Panc1 (cell line): ENCODE measurements at regions of chr5 and their contacts with region 1.

Region 1: GRCh38 chr5:55691265-55692105 is 20.6 kb downstream of the SLC38A9 start:
- DNase-seq: peak; percentile 60
- ATAC-seq: peak; percentile 84
- H3K4me3 ChIP-seq: no peak overlapping the region
- H3K27ac ChIP-seq: no peak overlapping the region
- H3K4me1 ChIP-seq: no peaks in the 10 kb centered on the region
- H3K27me3 ChIP-seq: no peaks in the 10 kb centered on the region
- CTCF ChIP-seq: peak; percentile 66; the same call in 1 of the 2 replicates

Region 2: GRCh38 chr5:55344392-55344992 is 347.0 kb before region 1 on chr5:
- CTCF ChIA-PET with region 1: no interaction called
- POLR2A ChIA-PET with region 1: no interaction called
- in situ Hi-C with region 1: no loop called
- intact Hi-C with region 1: loop called (anchors 10 kb)
- DNase-seq: peak; percentile 54
- ATAC-seq: no peak
- H3K4me3 ChIP-seq: no peak overlapping the region
- H3K27ac ChIP-seq: no peak overlapping the region
- H3K4me1 ChIP-seq: no peaks in the 10 kb centered on the region
- H3K27me3 ChIP-seq: no peaks in the 10 kb centered on the region
- CTCF ChIP-seq: peak; percentile 82; the same call in 1 of the 2 replicates

Region 3: GRCh38 chr5:55407059-55407684 is 284.3 kb before region 1 on chr5:
- CTCF ChIA-PET with region 1: interaction called, 5 read pairs
- POLR2A ChIA-PET with region 1: no interaction called
- in situ Hi-C with region 1: no loop called
- intact Hi-C with region 1: loop called (anchors 2 kb)
- DNase-seq: peak; percentile 15
- ATAC-seq: peak; percentile 82
- H3K4me3 ChIP-seq: no peak overlapping the region
- H3K27ac ChIP-seq: no peak overlapping the region
- H3K4me1 ChIP-seq: no peaks in the 10 kb centered on the region
- H3K27me3 ChIP-seq: no peaks in the 10 kb centered on the region
- CTCF ChIP-seq: peak; percentile 75; the same call in 1 of the 2 replicates

Region 4: GRCh38 chr5:55593115-55593472 is 98.4 kb before region 1 on chr5:
- CTCF ChIA-PET with region 1: no interaction called
- POLR2A ChIA-PET with region 1: no interaction called
- in situ Hi-C with region 1: no loop called
- intact Hi-C with region 1: no loop called
- DNase-seq: no peak
- ATAC-seq: no peak
- H3K4me3 ChIP-seq: no peak overlapping the region
- H3K27ac ChIP-seq: no peak overlapping the region
- H3K4me1 ChIP-seq: no peaks in the 10 kb centered on the region
- H3K27me3 ChIP-seq: no peaks in the 10 kb centered on the region
- CTCF ChIP-seq: no peak